AG04449 (cell line): ENCODE measurements at regions of chr18 and their contacts with region 1.

Region 1: DNA sequence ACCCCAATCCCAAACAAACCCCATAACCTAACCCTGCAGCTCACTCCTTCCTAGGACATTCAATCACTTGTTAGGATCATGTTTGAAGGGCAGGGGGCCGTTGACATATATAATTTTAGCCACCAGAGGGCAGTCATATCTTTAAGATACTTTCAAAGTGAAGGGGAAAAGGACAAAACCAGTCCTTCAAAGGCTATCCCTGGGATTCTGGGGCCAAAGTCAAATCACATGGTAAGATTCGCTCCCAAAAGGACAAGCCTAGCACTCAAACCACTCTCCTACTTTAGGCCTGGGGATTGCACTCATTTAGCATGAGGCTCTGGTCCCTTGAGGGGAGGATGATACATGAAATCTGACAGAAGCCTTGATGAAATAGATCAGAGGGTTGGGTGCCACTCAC is 44.6 kb downstream of the HAUS1 start:
- DNase-seq: no peak
- H3K4me3 ChIP-seq: no peak overlapping the region
- CTCF ChIP-seq: peak; percentile 35

Region 2: GRCh38 chr18:45890606-45891005 is 258.2 kb before region 1 on chr18:
- CTCF ChIA-PET with region 1: no interaction called
- POLR2A ChIA-PET with region 1: no interaction called
- DNase-seq: no peak
- H3K4me3 ChIP-seq: no peak overlapping the region
- CTCF ChIP-seq: no peak

Region 3: GRCh38 chr18:46051731-46052461 is 96.9 kb before region 1 on chr18:
- CTCF ChIA-PET with region 1: no interaction called
- POLR2A ChIA-PET with region 1: no interaction called
- DNase-seq: peak; percentile 72
- H3K4me3 ChIP-seq: no peak overlapping the region
- CTCF ChIP-seq: no peak

Region 4: DNA sequence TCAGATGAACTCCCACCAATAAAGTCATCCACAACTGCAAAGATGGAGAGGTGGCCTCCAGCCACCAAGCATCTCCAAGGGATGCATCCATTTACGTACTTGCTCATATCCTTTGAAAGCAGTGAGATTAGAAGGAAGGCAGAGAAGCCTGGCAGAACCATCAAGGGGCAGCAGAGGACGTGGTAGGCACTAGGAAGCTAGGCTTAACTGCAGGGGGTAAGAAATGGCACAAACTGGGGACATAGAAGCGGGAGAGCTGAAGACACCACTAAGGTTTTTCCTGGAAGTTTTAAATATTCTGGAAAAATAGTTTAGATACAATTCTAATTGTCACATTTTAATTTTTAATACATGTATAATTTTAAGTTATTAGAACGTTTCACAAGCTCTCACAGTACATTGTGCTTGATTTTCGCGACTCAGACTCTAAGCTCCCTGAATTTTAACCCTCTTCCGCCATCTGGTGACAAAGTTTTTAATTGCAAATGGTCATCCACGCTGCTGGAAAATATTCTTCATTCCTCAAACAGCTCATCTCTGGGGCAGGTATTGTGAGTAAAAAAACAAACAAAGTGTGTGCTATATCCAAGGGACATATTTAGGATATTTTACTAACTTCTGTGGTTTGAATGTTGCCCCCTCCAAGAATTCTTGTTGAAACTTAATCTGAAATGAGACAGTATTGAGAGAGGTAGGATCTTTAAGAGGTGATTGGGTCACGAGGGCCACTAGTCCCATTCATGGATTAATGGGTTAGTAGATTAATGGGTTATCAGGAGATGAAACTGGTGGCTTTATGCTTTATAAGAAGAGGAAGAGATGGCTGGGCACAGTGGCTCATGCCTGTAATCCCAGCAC is 75.1 kb before region 1 on chr18:
- CTCF ChIA-PET with region 1: no interaction called
- POLR2A ChIA-PET with region 1: no interaction called
- DNase-seq: no peak
- H3K4me3 ChIP-seq: no peak overlapping the region
- CTCF ChIP-seq: peak; percentile 43

Region 5: GRCh38 chr18:46134920-46135675 is 13.7 kb before region 1 on chr18:
- CTCF ChIA-PET with region 1: interaction called, 27 read pairs
- POLR2A ChIA-PET with region 1: no interaction called
- DNase-seq: no peak
- H3K4me3 ChIP-seq: no peak overlapping the region
- CTCF ChIP-seq: no peak

Region 6: GRCh38 chr18:46239549-46239948 is 90.7 kb after region 1 on chr18:
- CTCF ChIA-PET with region 1: interaction called, 10 read pairs
- POLR2A ChIA-PET with region 1: no interaction called
- DNase-seq: no peak
- H3K4me3 ChIP-seq: no peak overlapping the region
- CTCF ChIP-seq: no peak

Region 7: DNA sequence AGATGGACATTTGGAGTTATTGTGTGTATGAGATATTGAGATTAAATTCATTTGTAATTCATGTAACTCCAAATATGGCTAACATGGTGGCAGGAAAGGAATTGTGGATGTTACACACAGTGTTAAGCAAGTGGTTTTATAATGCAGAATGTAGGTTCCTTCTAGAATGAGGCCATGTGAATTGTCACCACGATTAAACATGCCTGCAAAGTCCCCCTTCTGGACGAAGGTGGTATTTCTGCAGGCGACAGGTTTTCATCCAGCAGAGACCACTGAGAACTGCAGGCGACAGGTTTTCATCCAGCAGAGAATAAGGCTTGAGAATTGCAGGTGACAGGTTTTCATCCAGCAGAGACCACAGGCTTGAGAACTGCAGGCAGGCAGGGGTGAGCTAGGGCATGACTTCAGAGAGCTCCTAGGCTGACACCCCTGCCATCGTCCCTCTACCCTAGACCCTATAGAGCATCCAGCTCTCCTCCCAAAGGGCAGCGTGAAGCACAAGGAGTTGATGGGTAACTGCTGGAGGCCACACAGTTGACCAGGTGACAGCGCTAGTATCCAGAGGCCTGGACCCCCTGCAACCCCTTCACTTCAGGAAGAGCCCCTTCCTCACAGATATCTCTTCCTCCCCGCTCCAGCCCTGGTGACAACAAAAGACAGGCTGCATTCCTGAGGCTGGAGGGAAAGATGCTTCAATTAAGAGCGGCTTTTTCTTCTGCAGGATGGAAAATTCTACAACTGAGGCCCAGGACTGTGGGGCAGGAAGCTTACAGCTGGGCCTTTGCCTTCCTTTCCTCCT is 332.4 kb after region 1 on chr18:
- CTCF ChIA-PET with region 1: interaction called, 36 read pairs
- POLR2A ChIA-PET with region 1: no interaction called
- DNase-seq: no peak
- H3K4me3 ChIP-seq: no peak overlapping the region
- CTCF ChIP-seq: peak; percentile 56

Region 8: DNA sequence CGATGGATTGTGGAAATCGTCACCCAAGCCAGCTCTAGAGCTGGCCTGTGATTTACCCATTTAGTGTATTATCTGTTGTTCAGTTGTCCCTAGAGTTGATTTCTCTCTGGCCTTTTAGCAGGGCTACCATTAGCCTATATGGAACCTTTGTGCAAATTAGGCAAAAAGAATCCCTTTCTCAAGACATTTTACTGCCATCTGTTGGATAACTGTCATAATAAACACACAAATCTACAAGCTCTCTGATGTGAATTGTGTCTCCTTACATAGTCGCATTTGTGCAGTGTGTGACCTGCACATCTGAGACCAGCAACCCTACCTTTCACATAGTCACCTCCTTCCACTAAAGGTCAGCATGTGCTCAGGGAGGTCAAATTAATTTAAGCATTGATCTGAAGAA is 474.2 kb after region 1 on chr18:
- CTCF ChIA-PET with region 1: interaction called, 12 read pairs
- POLR2A ChIA-PET with region 1: interaction called, 3 read pairs
- DNase-seq: no peak
- H3K4me3 ChIP-seq: no peak overlapping the region
- CTCF ChIP-seq: no peak

Region 9: GRCh38 chr18:46660955-46661749 is 512.3 kb after region 1 on chr18:
- CTCF ChIA-PET with region 1: interaction called, 207 read pairs
- POLR2A ChIA-PET with region 1: no interaction called
- DNase-seq: no peak
- H3K4me3 ChIP-seq: no peak overlapping the region
- CTCF ChIP-seq: no peak